ENCODE measurements at regions of chr2 and their contacts with region 1.

Region 1: DNA sequence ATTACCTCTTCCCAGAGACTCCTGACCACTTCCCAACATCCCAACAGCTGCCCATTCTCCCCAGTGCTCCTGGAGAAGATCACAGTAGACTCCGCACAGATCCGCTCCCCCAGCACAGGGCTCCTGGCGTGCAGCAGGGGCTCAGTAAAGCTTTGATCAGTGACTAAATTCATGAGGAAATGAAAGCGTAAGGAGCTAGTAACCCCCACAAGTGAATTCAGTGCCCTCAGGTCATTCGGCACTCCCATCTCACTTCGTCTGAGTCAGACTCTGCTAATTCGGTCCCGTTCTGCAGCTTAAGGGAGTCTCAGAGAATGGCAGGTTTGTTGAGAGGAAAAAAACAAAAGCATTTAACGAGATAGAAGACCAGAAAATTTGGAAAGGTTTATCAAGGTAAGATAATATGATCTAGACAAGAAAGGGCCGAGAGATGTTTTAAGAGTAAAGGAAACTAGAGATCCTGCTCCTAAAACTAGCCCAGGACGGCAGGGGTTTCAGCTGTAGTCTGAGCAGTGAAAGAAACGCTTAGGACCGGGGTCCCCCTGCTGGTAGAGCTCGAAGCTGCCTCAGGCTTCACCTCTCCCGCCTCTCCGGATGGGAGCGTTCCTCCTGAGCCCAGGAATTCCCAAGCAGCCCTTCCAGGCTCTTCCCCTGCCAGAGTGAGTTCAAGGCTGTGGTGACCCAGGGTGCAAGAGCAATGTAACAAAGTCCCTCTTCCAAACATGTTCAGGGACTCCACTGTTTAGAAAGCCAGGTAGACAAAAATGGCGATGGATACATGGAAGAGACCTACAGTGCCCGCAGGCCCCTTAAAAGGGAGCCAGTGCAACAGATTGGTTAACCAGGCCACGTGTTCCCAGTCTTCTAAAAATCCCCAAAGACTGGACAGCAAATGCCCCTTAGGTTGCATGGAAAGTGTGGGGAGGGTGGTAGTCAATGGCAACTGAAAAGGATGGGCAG is 127.3 kb downstream of the DNER start:
- DNase-seq: peak; percentile 91
- H3K4me3 ChIP-seq: peak overlapping the region; percentile 3 to 28 (median 17)
- H3K27ac ChIP-seq: peak overlapping the region in 2 of 4 donors; percentile 43 to 51
- H3K4me1 ChIP-seq: peaks cover 0 to 5% (median 2%) of the 10 kb centered on the region in 4 donors
- H3K27me3 ChIP-seq: no peaks in the 10 kb centered on the region
- CTCF ChIP-seq: peak; percentile 70 to 90 (median 85)
- EP300 ChIP-seq: no peak
- POLR2A ChIP-seq: no peak

Region 2: DNA sequence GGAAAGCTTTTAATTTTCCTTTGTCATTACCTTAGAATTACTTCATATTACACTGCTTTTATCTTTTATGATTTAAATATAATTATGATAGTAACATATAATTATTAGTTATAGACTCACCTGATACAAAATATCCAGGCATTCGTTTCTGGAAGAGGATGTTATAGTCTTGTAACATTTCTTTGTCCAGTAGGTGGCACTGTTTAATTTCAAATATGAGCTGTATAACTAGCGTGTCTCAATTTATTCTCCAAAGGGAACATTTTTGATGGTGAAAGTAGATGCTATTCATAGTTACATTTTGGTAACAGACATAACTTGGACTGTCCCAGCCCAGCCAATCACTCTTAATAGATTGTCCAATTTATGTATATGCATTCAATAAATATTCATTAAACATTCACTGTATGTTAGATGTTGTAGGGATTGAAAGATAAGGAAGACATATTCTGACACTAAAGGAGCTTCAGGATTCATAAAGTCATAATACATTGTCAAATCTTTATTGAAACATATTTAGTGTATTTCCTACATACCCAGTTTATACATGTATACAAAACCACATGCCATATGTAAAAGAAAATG is 1696.4 kb before region 1 on chr2:
- intact Hi-C with region 1: loop called (anchors 10 kb)
- DNase-seq: no peak
- H3K4me3 ChIP-seq: no peak overlapping the region
- H3K27ac ChIP-seq: no peak overlapping the region
- H3K4me1 ChIP-seq: no peaks in the 10 kb centered on the region
- H3K27me3 ChIP-seq: no peaks in the 10 kb centered on the region
- CTCF ChIP-seq: peak in 3 of 4 experiments; percentile 21 to 57 (median 32)
- EP300 ChIP-seq: no peak
- POLR2A ChIP-seq: no peak

Region 3: GRCh38 chr2:229431327-229431954 is 155.6 kb before region 1 on chr2:
- intact Hi-C with region 1: loop called (anchors 1 kb)
- DNase-seq: no peak
- H3K4me3 ChIP-seq: no peak overlapping the region
- H3K27ac ChIP-seq: peak overlapping the region in 3 of 4 donors; percentile 23 to 49 (median 44)
- H3K4me1 ChIP-seq: peaks cover 0 to 4% (median 0%) of the 10 kb centered on the region in 4 donors
- H3K27me3 ChIP-seq: no peaks in the 10 kb centered on the region
- CTCF ChIP-seq: peak in 3 of 4 experiments; percentile 19 to 44 (median 35)
- EP300 ChIP-seq: no peak
- POLR2A ChIP-seq: no peak